GM12878 (cell line): ENCODE measurements at regions of chr10 and their contacts with region 1.

Region 1: DNA sequence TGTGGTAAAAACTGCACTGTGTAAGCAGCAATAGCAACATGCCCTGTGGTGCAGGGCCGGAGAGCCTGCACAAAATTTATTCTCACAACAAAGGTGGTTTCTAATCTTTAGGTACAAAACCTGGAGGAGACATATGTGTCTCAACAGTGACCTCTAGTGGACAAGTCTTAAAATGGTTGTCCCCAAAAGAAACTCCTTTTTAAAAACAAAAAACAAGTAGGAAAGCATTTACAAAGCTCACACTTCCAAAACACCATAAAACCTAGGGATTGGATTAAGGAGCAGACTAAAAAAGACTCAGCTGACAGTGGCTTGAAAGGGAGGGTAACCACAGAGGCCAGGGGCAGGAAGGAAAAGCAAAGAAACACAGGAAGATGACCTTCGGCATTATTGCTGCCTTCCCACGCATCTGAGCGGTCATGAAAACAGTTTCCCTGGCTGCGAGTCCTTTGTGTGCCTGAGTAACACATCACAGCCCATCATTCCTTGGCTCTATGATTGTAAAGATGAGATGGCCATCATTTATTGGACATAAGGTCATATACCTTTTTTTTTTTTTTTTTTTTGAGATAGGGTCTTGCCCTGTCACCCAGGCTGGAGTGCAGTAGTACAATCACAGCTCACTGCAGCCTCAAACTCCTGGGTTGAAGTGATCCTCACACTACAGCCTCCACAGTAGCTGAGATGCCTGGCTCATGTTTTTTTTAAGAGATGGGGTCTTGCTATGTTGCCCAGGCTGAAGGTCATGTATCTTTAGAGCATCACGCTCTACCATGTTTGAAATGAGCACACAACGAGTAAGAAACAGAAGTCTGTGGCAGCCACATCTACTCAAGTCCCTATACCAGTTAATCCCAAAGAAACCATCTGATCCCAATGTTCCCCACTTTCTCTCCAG is 39.5 kb downstream of the RSU1 start:
- DNase-seq: no peak
- ATAC-seq: peak; percentile 77
- H3K4me3 ChIP-seq: no peak overlapping the region
- H3K27ac ChIP-seq: no peak overlapping the region
- H3K4me1 ChIP-seq: peaks cover 18% of the 10 kb centered on the region
- H3K27me3 ChIP-seq: no peaks in the 10 kb centered on the region
- CTCF ChIP-seq: peak; percentile 46 to 70 (median 62); a peak in 5 of 6 replicates
- EP300 ChIP-seq: no peak
- POLR2A ChIP-seq: no peak
- RAD21 ChIP-seq: peak; percentile 86

Region 2: GRCh38 chr10:16049050-16049449 is 728.7 kb before region 1 on chr10:
- CTCF ChIA-PET with region 1: no interaction called
- POLR2A ChIA-PET with region 1: no interaction called
- RAD21 ChIA-PET with region 1: no interaction called
- SMC1A ChIA-PET with region 1: no interaction called
- in situ Hi-C with region 1: no loop called
- intact Hi-C with region 1: loop called (anchors 5 kb)
- DNase-seq: no peak
- ATAC-seq: no peak; the same call in 2 of the 3 replicates
- H3K4me3 ChIP-seq: no peak overlapping the region
- H3K27ac ChIP-seq: no peak overlapping the region
- H3K4me1 ChIP-seq: no peaks in the 10 kb centered on the region
- H3K27me3 ChIP-seq: no peaks in the 10 kb centered on the region
- CTCF ChIP-seq: peak in 2 of 3 experiments; percentile 4 to 30; a peak in 3 of 6 replicates
- EP300 ChIP-seq: no peak
- POLR2A ChIP-seq: no peak
- RAD21 ChIP-seq: peak; percentile 38; the same call in 1 of the 2 replicates

Region 3: GRCh38 chr10:16314259-16314658 is 463.5 kb before region 1 on chr10:
- CTCF ChIA-PET with region 1: interaction called, 4 read pairs
- POLR2A ChIA-PET with region 1: no interaction called
- RAD21 ChIA-PET with region 1: no interaction called
- SMC1A ChIA-PET with region 1: no interaction called
- in situ Hi-C with region 1: no loop called
- intact Hi-C with region 1: loop called (anchors 10 kb)
- DNase-seq: no peak
- ATAC-seq: 0 out of 3 replicates have a peak, but pooled peaks have one; percentile 31
- H3K4me3 ChIP-seq: no peak overlapping the region
- H3K27ac ChIP-seq: no peak overlapping the region
- H3K4me1 ChIP-seq: no peaks in the 10 kb centered on the region
- H3K27me3 ChIP-seq: no peaks in the 10 kb centered on the region
- CTCF ChIP-seq: peak in 2 of 3 experiments; percentile 10 to 28; a peak in 2 of 6 replicates
- EP300 ChIP-seq: no peak
- POLR2A ChIP-seq: no peak
- RAD21 ChIP-seq: peak; percentile 30; the same call in 1 of the 2 replicates

Region 4: GRCh38 chr10:16519908-16520861 is 257.5 kb before region 1 on chr10:
- CTCF ChIA-PET with region 1: interaction called, 5 read pairs
- POLR2A ChIA-PET with region 1: no interaction called
- RAD21 ChIA-PET with region 1: interaction called, 4 read pairs
- SMC1A ChIA-PET with region 1: interaction called, 3 read pairs
- in situ Hi-C with region 1: no loop called
- intact Hi-C with region 1: loop called (anchors 10 kb)
- DNase-seq: no peak
- ATAC-seq: peak; percentile 27
- H3K4me3 ChIP-seq: peak overlapping the region; percentile 62; the same call in 1 of the 2 replicates
- H3K27ac ChIP-seq: no peak overlapping the region
- H3K4me1 ChIP-seq: peaks cover 8% of the 10 kb centered on the region
- H3K27me3 ChIP-seq: peaks cover 2 to 3% of the 10 kb centered on the region in 2 experiments; a peak in 1 of 4 replicates
- CTCF ChIP-seq: no peak
- EP300 ChIP-seq: no peak
- POLR2A ChIP-seq: no peak
- RAD21 ChIP-seq: no peak

Region 5: DNA sequence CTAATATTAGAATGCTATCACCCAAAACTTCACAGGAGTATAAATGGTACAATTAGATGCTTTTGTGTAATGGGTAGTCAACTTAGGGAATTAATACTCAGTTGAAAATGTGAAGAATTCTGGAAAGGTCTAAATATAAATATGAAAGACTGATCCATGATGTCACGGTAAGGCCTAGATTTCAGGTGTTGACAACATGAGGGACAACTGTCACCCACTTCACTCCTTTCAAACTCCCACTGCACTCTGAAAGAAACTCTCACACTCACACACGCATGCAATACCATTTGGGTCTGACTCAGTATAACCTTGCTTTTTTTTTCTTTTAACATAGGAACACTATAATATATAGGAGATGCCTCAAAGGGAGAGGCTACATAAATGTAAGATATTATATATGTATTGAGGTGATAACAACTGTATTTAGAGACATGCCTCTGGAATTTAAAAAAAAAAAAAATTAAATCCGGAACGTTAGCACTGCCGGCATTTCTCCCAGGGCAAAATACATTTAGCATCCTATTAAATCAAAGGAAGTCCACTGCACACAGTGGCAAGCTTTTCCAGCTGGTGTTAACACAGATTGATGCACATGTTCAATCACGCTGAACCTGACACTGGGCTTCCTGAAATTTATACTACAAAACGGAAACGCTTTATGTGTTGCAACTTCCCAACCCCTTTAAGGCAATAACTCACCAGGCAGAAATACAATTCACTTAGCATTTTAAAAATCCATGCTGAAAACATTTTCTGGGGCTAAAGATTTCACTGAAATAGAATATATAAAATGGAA is 35.4 kb before region 1 on chr10:
- CTCF ChIA-PET with region 1: no interaction called
- POLR2A ChIA-PET with region 1: no interaction called
- RAD21 ChIA-PET with region 1: no interaction called
- SMC1A ChIA-PET with region 1: no interaction called
- in situ Hi-C with region 1: no loop called
- intact Hi-C with region 1: no loop called
- DNase-seq: no peak
- ATAC-seq: no peak
- H3K4me3 ChIP-seq: no peak overlapping the region
- H3K27ac ChIP-seq: no peak overlapping the region
- H3K4me1 ChIP-seq: no peaks in the 10 kb centered on the region
- H3K27me3 ChIP-seq: no peaks in the 10 kb centered on the region
- CTCF ChIP-seq: no peak
- EP300 ChIP-seq: no peak
- POLR2A ChIP-seq: no peak
- RAD21 ChIP-seq: no peak

Region 6: DNA sequence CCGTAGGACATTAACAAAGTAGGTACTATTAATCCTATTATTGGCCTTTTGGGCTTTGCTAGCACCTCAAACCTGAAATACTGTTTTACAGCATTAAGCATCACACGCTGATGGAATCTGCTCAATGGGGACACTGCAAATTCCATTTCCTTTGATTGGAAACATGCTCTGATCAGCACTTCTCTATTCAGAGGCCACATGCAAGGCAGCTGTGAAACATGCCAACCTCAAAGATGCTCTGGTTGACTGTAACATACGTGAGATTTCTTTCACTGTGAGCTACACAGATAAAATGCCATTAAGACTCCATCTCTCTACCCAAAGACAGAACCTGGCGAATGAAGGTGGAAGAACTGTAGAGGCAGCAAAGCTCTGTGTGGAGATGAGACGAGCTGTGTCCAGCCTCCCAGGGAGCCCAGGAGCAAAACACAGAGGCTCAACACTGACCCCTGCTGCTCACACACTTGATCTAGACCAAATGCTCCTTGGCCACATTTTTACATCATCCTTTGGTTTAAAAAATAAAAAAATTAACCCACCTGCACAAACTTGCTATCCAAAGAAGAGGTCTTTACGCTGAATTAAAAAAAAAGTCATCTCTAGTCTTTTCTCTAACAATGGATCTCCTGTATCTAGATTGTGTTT is 31.5 kb after region 1 on chr10:
- CTCF ChIA-PET with region 1: interaction called, 37 read pairs
- POLR2A ChIA-PET with region 1: no interaction called
- RAD21 ChIA-PET with region 1: interaction called, 6 read pairs
- SMC1A ChIA-PET with region 1: interaction called, 9 read pairs
- in situ Hi-C with region 1: no loop called
- intact Hi-C with region 1: loop called (anchors 2 kb)
- DNase-seq: no peak
- ATAC-seq: peak; percentile 96
- H3K4me3 ChIP-seq: no peak overlapping the region
- H3K27ac ChIP-seq: no peak overlapping the region
- H3K4me1 ChIP-seq: no peaks in the 10 kb centered on the region
- H3K27me3 ChIP-seq: no peaks in the 10 kb centered on the region
- CTCF ChIP-seq: peak; percentile 69 to 70 (median 69)
- EP300 ChIP-seq: no peak
- POLR2A ChIP-seq: no peak
- RAD21 ChIP-seq: peak; percentile 79

Region 7: GRCh38 chr10:16902606-16903005 is 124.9 kb after region 1 on chr10:
- CTCF ChIA-PET with region 1: no interaction called
- POLR2A ChIA-PET with region 1: no interaction called
- RAD21 ChIA-PET with region 1: no interaction called
- SMC1A ChIA-PET with region 1: no interaction called
- in situ Hi-C with region 1: no loop called
- intact Hi-C with region 1: no loop called
- DNase-seq: no peak
- ATAC-seq: no peak
- H3K4me3 ChIP-seq: no peak overlapping the region
- H3K27ac ChIP-seq: no peak overlapping the region
- H3K4me1 ChIP-seq: no peaks in the 10 kb centered on the region
- H3K27me3 ChIP-seq: no peaks in the 10 kb centered on the region
- CTCF ChIP-seq: no peak
- EP300 ChIP-seq: no peak
- POLR2A ChIP-seq: no peak
- RAD21 ChIP-seq: no peak